Body of pancreas (tissue), 4 donors: ENCODE measurements at regions of chr1 and their contacts with region 1.

Region 1: DNA sequence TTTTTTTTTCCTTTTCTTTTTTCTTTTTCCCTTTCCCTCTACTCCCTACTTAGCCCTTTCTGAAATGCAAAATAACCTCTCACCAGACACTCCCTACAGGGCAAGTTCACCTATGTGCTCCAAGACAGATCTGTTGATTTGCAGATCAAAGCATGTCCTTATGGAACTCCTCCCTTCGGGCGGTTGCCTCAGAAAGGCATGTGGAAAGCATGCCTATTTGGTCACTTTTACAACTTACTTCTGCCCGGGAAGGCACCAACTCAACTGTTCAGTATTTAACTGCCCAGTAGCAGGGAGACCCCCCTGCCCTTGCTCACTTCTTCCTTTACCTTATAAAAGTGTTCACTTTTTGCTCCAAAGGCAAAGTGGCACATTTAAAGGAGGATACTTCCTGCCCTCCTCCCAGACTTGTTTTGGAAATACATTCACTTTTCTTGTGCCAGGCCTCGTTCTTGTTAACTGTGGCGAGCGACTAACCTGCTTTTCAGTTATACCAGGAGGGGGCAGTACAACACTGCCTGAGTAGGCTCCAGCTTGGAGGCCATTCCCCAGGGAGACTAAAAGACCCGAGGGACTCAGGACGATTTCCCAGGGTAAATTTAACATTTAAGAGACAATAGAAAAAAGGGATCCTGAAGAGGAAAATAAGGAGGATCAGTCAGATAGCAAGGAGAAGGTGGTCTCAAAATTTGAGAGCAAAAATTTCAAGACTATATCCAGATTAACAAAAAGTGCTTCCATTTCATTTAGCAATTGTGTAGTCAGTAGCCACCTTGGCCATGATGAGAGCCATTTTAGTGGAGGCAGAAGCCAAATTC is 12.3 kb upstream of the SLAMF7 start:
- DNase-seq: peak; percentile 50 to 70 (median 66)
- ATAC-seq: peak; percentile 81
- H3K4me3 ChIP-seq: no peak overlapping the region
- H3K27ac ChIP-seq: no peak overlapping the region
- H3K4me1 ChIP-seq: no peaks in the 10 kb centered on the region
- H3K27me3 ChIP-seq: no peaks in the 10 kb centered on the region
- CTCF ChIP-seq: peak; percentile 28 to 87 (median 84)
- POLR2A ChIP-seq: no peak

Region 2: DNA sequence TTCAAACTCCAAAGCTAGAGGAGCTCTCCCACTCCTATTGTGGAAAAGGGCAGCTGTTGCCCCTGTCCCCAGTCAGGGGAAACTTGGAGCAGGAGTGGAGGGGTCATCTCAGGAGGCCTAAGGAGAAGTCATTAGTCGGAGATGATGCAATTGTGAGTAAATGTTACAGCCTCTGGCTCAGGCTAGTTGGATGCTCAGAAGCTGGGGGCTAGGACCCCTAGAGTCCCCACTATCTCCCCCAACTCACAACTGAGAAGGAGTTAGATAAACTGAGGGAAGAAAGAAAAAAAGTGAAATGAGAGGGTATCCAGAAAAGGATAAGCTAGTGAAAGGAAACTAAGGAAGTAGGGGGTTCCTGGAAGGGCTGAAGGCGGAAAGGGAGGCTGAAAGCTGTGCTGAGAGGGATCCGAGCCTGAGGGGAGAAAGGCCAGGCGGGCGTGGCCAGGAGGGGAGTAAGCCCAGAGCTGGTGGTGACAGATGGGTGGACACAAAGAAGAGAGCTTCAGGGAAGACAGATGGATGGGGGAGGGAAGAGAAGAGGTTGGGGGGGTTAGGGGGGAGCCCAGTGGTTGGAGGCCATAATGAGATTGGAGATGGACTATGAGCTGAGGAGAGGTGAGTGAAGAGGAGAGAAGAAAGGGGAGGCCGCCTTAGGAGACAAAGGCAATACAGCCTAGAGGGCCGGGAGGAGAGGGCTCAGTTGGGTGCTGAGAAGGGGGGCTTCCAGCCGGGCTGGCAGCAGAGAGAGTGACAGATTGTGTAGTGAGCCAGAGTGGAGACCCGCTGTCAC is 364.3 kb before region 1 on chr1:
- intact Hi-C with region 1: no loop called
- DNase-seq: no peak
- ATAC-seq: no peak
- H3K4me3 ChIP-seq: no peak overlapping the region
- H3K27ac ChIP-seq: no peak overlapping the region
- H3K4me1 ChIP-seq: no peaks in the 10 kb centered on the region
- H3K27me3 ChIP-seq: no peaks in the 10 kb centered on the region
- CTCF ChIP-seq: no peak
- POLR2A ChIP-seq: no peak

Region 3: DNA sequence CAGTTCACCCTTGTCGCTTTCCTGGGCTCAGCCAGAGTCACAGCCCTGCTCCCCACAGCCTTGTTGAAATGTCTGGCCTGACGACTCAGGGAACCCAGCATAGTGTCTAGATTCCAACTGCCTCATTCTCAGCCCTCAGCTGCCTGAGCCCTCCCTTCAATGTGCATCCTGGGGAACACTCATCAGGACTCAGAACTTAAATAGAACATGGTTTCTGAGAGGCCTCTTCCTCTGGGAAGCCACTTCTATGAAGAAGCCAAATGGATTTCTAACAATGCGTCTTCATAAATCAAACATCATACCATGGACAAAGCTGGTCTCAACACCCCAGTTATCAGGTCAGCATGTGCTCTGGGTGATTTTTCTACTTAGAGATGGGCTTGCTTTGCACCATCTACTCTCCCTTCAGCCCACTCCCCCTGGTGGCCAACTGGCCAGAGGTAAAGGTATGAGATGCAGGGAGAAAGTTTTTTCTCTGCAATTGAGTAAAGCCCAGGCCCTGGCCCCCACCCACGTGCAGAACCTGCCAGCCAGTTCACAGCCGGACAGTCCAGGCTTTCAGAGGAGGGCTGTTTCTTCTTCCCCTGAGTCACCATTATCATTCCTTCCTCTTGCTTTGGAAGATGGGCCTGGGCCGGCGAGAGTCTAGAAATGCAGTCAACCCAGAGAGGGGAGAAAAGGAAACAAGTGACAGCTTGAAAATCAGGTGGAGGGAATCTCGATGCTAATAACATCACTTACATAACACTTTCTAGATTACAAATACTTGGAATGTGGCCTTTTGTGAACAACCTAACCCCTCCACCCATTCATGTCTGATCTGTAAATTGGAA is 103.8 kb after region 1 on chr1:
- intact Hi-C with region 1: loop called (anchors 5 kb)
- DNase-seq: peak; percentile 69 to 75 (median 72)
- ATAC-seq: peak; percentile 62
- H3K4me3 ChIP-seq: no peak overlapping the region
- H3K27ac ChIP-seq: no peak overlapping the region
- H3K4me1 ChIP-seq: no peaks in the 10 kb centered on the region
- H3K27me3 ChIP-seq: no peaks in the 10 kb centered on the region
- CTCF ChIP-seq: peak; percentile 48 to 71 (median 65)
- POLR2A ChIP-seq: no peak